Transverse colon (tissue), 4 donors: ENCODE measurements at regions of chr5 and their contacts with region 1.

Region 1: GRCh38 chr5:95669540-95669939 is 13.3 kb downstream of the SPATA9 start:
- DNase-seq: peak; percentile 59
- H3K4me3 ChIP-seq: no peak overlapping the region
- H3K27ac ChIP-seq: peak overlapping the region; percentile 68 to 87 (median 80)
- H3K4me1 ChIP-seq: peaks cover 0 to 23% (median 3%) of the 10 kb centered on the region in 4 donors
- H3K27me3 ChIP-seq: no peaks in the 10 kb centered on the region
- CTCF ChIP-seq: no peak
- EP300 ChIP-seq: peak; percentile 54
- POLR2A ChIP-seq: no peak

Region 2: GRCh38 chr5:95781101-95781583 is 111.6 kb after region 1 on chr5:
- in situ Hi-C with region 1: loop called in 1 of 4 experiments (anchors 5 kb)
- intact Hi-C with region 1: loop called (anchors 10 kb)
- DNase-seq: peak; percentile 86
- H3K4me3 ChIP-seq: no peak overlapping the region
- H3K27ac ChIP-seq: peak overlapping the region; percentile 19 to 65 (median 42)
- H3K4me1 ChIP-seq: peaks cover 0 to 13% (median 2%) of the 10 kb centered on the region in 4 donors
- H3K27me3 ChIP-seq: no peaks in the 10 kb centered on the region
- CTCF ChIP-seq: peak; percentile 76 to 96 (median 85)
- EP300 ChIP-seq: no peak
- POLR2A ChIP-seq: no peak